ENCODE measurements at regions of chr17 and their contacts with region 1.

Region 1: GRCh38 chr17:77881545-77881944 is 77.0 kb upstream of the TNRC6C start:
- DNase-seq: peak; percentile 89
- ATAC-seq: peak; percentile 96
- H3K4me3 ChIP-seq: peak overlapping the region; percentile 4; the same call in 1 of the 2 replicates
- H3K27ac ChIP-seq: no peak overlapping the region; the same call in 1 of the 2 replicates
- H3K4me1 ChIP-seq: peaks cover 21% of the 10 kb centered on the region
- H3K27me3 ChIP-seq: no peaks in the 10 kb centered on the region; a peak in 2 of 4 replicates
- CTCF ChIP-seq: no peak
- EP300 ChIP-seq: peak; percentile 70 to 90; a peak in 3 of 4 replicates
- POLR2A ChIP-seq: no peak
- RAD21 ChIP-seq: peak; percentile 29; the same call in 1 of the 2 replicates

Region 2: DNA sequence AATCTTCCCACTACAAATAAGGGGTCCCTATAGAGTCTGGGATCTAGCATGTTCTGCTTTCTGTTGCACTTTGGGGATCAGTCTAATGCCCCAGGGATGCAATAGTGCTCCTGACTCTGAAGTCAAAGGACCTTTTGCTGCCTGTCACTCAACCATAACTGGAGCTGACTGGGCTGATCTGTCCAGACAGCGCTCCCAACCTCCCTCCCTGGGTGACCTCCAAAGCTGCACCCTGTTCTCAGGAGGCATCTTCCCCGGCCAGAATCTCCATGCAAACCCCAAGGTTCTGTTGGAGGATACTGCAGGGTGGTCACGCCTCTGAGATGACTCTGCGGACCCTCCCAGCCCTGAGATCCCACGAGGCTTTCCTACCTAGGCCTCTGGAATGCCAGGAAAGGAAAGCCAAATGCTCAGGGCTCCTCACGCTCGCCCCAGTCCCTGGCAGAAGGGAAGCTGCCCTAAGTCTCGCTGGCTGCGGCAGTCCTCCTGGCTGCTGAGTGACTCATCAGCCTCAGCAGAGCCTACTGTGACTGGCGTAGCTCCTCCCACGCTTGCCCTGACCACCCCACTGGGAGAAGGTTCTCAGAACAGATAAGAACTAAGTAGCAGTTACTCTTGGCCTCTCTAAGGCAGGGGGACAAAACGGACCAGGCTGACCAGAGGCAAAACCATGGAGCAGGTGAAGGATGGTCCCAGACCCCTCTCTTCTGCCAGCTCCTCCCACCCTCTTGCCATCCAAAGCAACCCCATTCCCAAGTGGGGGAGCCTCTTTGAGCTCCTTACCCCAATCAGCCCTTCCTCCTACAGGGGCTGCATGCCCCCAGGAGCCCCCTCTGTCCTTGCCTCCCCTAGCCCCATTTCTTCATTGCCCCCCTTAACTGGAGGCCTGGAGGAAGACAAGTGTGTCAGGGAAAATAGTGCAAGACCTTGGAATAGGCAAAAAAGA is 47.1 kb before region 1 on chr17:
- CTCF ChIA-PET with region 1: interaction called, 7 read pairs
- POLR2A ChIA-PET with region 1: interaction called, 9 read pairs
- RAD21 ChIA-PET with region 1: interaction called, 20 read pairs
- SMC1A ChIA-PET with region 1: interaction called, 18 read pairs
- in situ Hi-C with region 1: no loop called
- intact Hi-C with region 1: loop called (anchors 10 kb)
- DNase-seq: peak; percentile 49
- ATAC-seq: peak; percentile 97
- H3K4me3 ChIP-seq: no peak overlapping the region
- H3K27ac ChIP-seq: no peak overlapping the region
- H3K4me1 ChIP-seq: peaks cover 6% of the 10 kb centered on the region
- H3K27me3 ChIP-seq: no peaks in the 10 kb centered on the region; a peak in 1 of 4 replicates
- CTCF ChIP-seq: no peak
- EP300 ChIP-seq: no peak
- POLR2A ChIP-seq: no peak
- RAD21 ChIP-seq: no peak

Region 3: GRCh38 chr17:77842528-77843147 is 38.9 kb before region 1 on chr17:
- CTCF ChIA-PET with region 1: interaction called, 4 read pairs
- POLR2A ChIA-PET with region 1: interaction called, 12 read pairs
- RAD21 ChIA-PET with region 1: interaction called, 27 read pairs
- SMC1A ChIA-PET with region 1: interaction called, 19 read pairs
- in situ Hi-C with region 1: no loop called
- intact Hi-C with region 1: loop called (anchors 10 kb)
- DNase-seq: no peak
- ATAC-seq: no peak
- H3K4me3 ChIP-seq: no peak overlapping the region
- H3K27ac ChIP-seq: no peak overlapping the region
- H3K4me1 ChIP-seq: peaks cover 14% of the 10 kb centered on the region
- H3K27me3 ChIP-seq: no peaks in the 10 kb centered on the region
- CTCF ChIP-seq: no peak
- EP300 ChIP-seq: no peak
- POLR2A ChIP-seq: no peak
- RAD21 ChIP-seq: no peak

Measured in GM12878 (cell line).